Activated CD8-positive, alpha-beta T cell treated with anti-CD3 and anti-CD28 coated beads, Interleukin-2, amount 10 ng/mL, durations not matched to agents 7 days and 5 days (primary cell): ENCODE measurements at regions of chr4 and their contacts with region 1.

Region 1: GRCh38 chr4:38179690-38180377 is 219.6 kb downstream of the PTTG2 start:
- DNase-seq: peak; percentile 78
- ATAC-seq: peak; percentile 52
- H3K4me3 Mint-ChIP-seq: no peak overlapping the region
- H3K27ac Mint-ChIP-seq: peak overlapping the region; percentile 12
- H3K4me1 Mint-ChIP-seq: peaks cover 36% of the 10 kb centered on the region
- H3K27me3 Mint-ChIP-seq: peaks cover 2% of the 10 kb centered on the region

Region 2: GRCh38 chr4:37928426-37929416 is 251.1 kb before region 1 on chr4:
- CTCF ChIA-PET with region 1: no interaction called
- POLR2A ChIA-PET with region 1: no interaction called
- DNase-seq: no peak
- ATAC-seq: peak; percentile 44
- H3K4me3 Mint-ChIP-seq: no peak overlapping the region
- H3K27ac Mint-ChIP-seq: no peak overlapping the region
- H3K4me1 Mint-ChIP-seq: peaks cover 24% of the 10 kb centered on the region
- H3K27me3 Mint-ChIP-seq: no peaks in the 10 kb centered on the region

Region 3: GRCh38 chr4:37977471-37978247 is 202.2 kb before region 1 on chr4:
- CTCF ChIA-PET with region 1: no interaction called
- POLR2A ChIA-PET with region 1: no interaction called
- DNase-seq: peak; percentile 81
- ATAC-seq: peak; percentile 88
- H3K4me3 Mint-ChIP-seq: peak overlapping the region; percentile 83
- H3K27ac Mint-ChIP-seq: peak overlapping the region; percentile 79
- H3K4me1 Mint-ChIP-seq: peaks cover 39% of the 10 kb centered on the region
- H3K27me3 Mint-ChIP-seq: no peaks in the 10 kb centered on the region

Region 4: GRCh38 chr4:38062088-38062893 is 117.5 kb before region 1 on chr4:
- CTCF ChIA-PET with region 1: interaction called, 34 read pairs
- POLR2A ChIA-PET with region 1: no interaction called
- DNase-seq: peak; percentile 75
- ATAC-seq: peak; percentile 69
- H3K4me3 Mint-ChIP-seq: peak overlapping the region; percentile 61
- H3K27ac Mint-ChIP-seq: peak overlapping the region; percentile 58
- H3K4me1 Mint-ChIP-seq: peaks cover 15% of the 10 kb centered on the region
- H3K27me3 Mint-ChIP-seq: no peaks in the 10 kb centered on the region

Region 5: DNA sequence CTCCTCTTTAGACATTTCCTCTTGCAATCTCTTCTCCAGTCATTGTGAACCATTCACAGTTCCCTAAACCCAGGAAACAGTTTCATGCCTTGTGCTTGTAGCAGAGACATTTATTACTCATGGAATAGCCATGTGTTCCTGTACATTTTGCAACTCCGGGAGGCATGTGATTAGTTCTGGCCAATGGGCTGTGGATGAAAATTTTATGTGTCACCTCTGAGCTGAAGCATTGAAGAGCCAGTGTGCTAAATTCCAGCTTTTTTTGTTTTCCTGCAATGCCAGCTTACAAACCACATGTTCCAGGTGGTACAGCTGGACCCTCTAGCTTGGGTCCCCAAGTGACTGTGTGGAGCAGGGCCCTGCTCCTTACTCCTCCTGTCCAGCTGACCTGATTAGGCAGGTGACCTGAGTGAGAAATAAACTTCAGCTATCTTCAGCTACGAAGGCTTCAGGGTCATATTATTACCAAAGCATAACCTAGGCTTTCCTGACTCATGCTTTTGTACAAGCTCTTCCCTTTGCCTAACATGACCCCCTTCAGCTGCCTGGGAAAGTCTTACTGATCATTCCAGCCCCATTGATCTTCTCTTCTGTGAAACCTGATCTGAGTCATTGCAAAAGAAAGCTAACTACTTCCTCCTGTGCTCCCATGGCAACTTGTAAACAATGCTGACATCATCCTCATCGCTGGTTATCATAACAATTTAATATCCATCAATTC is 19.2 kb before region 1 on chr4:
- CTCF ChIA-PET with region 1: interaction called, 16 read pairs
- POLR2A ChIA-PET with region 1: interaction called, 4 read pairs
- DNase-seq: peak; percentile 58
- ATAC-seq: peak; percentile 84
- H3K4me3 Mint-ChIP-seq: no peak overlapping the region
- H3K27ac Mint-ChIP-seq: peak overlapping the region; percentile 23
- H3K4me1 Mint-ChIP-seq: peaks cover 30% of the 10 kb centered on the region
- H3K27me3 Mint-ChIP-seq: peaks cover 4% of the 10 kb centered on the region

Region 6: GRCh38 chr4:38268837-38269236 is 89.0 kb after region 1 on chr4:
- CTCF ChIA-PET with region 1: no interaction called
- POLR2A ChIA-PET with region 1: no interaction called
- DNase-seq: no peak
- ATAC-seq: no peak
- H3K4me3 Mint-ChIP-seq: no peak overlapping the region
- H3K27ac Mint-ChIP-seq: no peak overlapping the region
- H3K4me1 Mint-ChIP-seq: no peaks in the 10 kb centered on the region
- H3K27me3 Mint-ChIP-seq: no peaks in the 10 kb centered on the region

Region 7: GRCh38 chr4:38310446-38311043 is 130.7 kb after region 1 on chr4:
- CTCF ChIA-PET with region 1: interaction called, 20 read pairs
- POLR2A ChIA-PET with region 1: no interaction called
- DNase-seq: peak; percentile 88
- ATAC-seq: peak; percentile 96
- H3K4me3 Mint-ChIP-seq: peak overlapping the region; percentile 54
- H3K27ac Mint-ChIP-seq: peak overlapping the region; percentile 87
- H3K4me1 Mint-ChIP-seq: peaks cover 60% of the 10 kb centered on the region
- H3K27me3 Mint-ChIP-seq: no peaks in the 10 kb centered on the region

Region 8: DNA sequence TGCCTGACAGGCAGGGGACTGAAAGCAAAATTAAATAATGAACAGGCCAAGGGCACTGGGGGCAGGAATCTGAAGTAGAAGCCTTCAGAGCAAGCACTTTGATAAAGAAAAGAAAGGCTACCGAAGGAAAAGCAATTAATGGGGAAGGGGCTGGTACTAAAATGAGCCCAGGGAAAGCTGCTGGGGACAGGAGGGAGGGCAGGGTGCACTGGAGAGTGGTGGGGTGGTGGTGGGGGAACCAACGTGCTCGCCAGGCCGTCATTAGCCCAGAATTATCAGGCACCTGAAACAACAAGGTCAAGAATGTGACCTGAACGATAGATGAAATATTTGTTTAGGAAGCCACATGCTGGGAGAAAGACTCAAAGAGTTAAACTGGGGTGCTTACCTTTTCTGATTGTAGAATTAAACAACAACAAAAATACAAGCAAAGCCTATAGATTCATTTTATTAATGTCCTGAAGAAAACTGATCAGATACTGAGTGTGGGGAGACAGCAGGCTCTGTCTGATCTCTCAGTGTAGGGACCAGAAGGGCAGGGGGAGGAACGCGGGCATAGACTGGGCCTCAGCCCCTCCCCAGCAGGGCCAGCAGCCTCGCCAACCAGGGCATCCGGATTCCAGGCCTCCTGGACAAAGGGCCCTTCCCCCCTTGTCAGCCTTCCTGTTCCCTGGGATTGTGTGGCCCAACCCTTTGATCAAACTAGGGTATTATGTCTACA is 244.5 kb after region 1 on chr4:
- CTCF ChIA-PET with region 1: no interaction called
- POLR2A ChIA-PET with region 1: no interaction called
- DNase-seq: no peak
- ATAC-seq: no peak
- H3K4me3 Mint-ChIP-seq: no peak overlapping the region
- H3K27ac Mint-ChIP-seq: no peak overlapping the region
- H3K4me1 Mint-ChIP-seq: peaks cover 3% of the 10 kb centered on the region
- H3K27me3 Mint-ChIP-seq: peaks cover 2% of the 10 kb centered on the region

Region 9: DNA sequence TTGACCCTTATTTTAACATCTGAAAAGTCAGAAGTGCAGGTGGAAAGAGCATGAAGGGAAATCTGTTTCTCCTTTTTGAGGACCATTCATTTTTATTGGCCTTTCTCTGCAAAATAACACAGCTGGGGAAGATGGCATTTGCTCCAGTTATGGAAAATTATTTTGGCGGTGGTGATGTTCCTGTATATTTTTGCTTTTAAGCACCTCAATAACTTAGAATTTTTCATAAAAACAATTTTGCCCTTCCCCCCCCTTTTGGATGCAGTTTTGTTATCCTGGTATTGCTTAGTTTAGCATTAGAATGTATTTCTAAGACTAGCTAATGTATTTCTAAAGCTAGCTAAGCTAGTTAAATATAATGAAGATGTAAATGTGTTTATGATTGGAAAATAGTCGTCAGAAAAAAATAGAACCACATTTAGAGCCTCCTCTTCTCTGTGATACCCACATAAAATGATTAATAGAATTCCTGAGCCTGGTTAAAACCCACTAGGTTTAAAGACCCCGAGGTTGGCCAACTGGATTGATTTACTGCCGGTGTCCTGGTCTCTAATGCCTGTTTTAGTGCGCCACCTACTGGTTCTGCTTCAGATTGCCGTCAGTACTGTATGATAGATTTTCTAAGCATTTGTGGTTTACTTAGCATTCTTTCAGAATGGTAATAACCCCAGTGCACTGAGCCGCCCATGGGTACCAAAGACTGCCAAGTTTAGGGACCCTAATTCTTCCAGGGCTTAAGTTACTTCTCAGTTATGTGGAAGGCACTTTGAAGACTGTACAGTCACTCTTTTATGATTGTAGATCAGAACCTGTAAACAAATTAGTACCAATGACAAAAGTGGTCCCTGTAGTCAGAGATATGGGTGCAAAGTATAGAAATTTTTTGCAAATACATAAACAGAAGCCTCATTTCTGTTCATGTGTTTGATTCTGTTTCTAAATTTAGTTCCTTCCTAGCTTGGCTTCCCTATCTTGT is 495.6 kb after region 1 on chr4:
- CTCF ChIA-PET with region 1: interaction called, 192 read pairs
- POLR2A ChIA-PET with region 1: interaction called, 3 read pairs
- DNase-seq: peak; percentile 90
- ATAC-seq: peak; percentile 77
- H3K4me3 Mint-ChIP-seq: no peak overlapping the region
- H3K27ac Mint-ChIP-seq: no peak overlapping the region
- H3K4me1 Mint-ChIP-seq: peaks cover 61% of the 10 kb centered on the region
- H3K27me3 Mint-ChIP-seq: no peaks in the 10 kb centered on the region

Region 10: DNA sequence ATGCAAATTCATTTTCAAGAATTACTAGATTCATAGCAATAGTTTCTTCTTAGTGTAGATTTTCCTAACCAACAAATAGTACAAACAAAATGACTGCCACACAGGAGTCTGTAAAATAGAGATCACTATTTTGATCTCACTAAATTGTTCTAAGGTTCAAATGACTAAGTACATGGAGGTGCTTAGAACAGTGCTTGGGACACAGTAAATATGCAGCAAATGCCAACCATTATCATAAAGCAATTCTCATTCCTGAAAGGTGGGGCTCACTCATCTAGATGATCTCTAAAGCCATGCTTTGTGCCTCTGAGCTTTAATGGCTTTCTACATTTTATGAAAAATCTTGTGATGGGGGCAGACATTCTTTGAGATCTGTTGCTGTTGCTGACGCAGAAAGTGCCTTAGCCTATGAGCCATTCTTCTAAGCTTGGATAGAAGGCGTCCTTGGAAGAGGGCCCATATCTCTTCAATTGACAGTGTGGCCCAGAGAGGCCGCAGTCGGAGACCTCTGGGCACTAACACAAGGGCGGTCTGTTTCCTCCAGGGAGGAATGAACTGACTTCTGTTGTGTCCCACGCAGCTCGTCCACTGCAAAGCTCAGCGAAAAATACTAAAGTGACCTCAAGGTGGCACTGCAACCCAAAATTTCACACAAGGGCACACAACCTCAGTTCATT is 579.4 kb after region 1 on chr4:
- CTCF ChIA-PET with region 1: interaction called, 10 read pairs
- POLR2A ChIA-PET with region 1: no interaction called
- DNase-seq: peak; percentile 77
- ATAC-seq: peak; percentile 86
- H3K4me3 Mint-ChIP-seq: no peak overlapping the region
- H3K27ac Mint-ChIP-seq: no peak overlapping the region
- H3K4me1 Mint-ChIP-seq: peaks cover 25% of the 10 kb centered on the region
- H3K27me3 Mint-ChIP-seq: no peaks in the 10 kb centered on the region